Spleen (tissue), 13 donors: ENCODE measurements at regions of chr22 and their contacts with region 1.

Region 1: GRCh38 chr22:26669060-26669481 is 11.7 kb downstream of the MIAT start:
- DNase-seq: peak; percentile 56
- H3K4me3 ChIP-seq: no peak overlapping the region
- H3K27ac ChIP-seq: peak overlapping the region in 4 of 8 donors; percentile 13 to 100 (median 100)
- H3K4me1 ChIP-seq: peaks cover 17 to 96% (median 65%) of the 10 kb centered on the region in 6 donors
- H3K27me3 ChIP-seq: no peaks in the 10 kb centered on the region
- CTCF ChIP-seq: peak in 7 of 11 experiments; percentile 25 to 56 (median 39)
- POLR2A ChIP-seq: no peak

Region 2: GRCh38 chr22:26483439-26484359 is 185.4 kb before region 1 on chr22 and contains the starts of genes HPS4 and SRRD:
- intact Hi-C with region 1: loop called (anchors 10 kb)
- DNase-seq: peak; percentile 98
- H3K4me3 ChIP-seq: peak within 1 kb of the TSS; percentile 75 to 93 (median 83)
- H3K27ac ChIP-seq: peak within 1 kb of the TSS; percentile 93 to 98 (median 96)
- H3K4me1 ChIP-seq: peaks cover 55 to 76% (median 73%) of the 10 kb centered on the region in 6 donors
- H3K27me3 ChIP-seq: no peaks in the 10 kb centered on the region
- CTCF ChIP-seq: peak in 3 of 11 experiments; percentile 14 to 28 (median 28)
- POLR2A ChIP-seq: peak; percentile 70 to 83 (median 78)
- total RNA-seq, gene HPS4: 34.0 to 56.6 (median 41.8) TPM
- total RNA-seq, gene SRRD: 16.4 to 21.1 (median 19.2) TPM

Region 3: DNA sequence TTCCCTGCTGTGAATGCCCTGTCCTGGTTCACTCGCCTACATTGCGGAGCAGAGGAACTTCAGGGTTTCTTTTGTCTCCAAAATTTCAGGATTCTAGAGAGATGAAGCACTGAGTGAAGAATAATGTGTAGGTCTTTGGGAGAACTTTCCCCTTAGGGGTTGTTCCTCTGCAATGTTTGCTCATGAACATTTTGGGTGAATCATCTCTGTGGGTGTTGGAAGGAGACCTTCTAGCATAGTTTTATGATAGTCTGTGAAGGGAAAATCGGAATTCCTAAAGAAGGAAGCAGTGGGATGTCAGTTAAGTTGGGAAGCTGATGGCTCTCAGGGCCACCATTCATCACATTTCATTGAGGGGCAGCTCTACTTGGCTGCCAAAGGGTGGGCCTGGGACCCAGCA is 53.1 kb after region 1 on chr22:
- intact Hi-C with region 1: no loop called
- DNase-seq: no peak
- H3K4me3 ChIP-seq: no peak overlapping the region
- H3K27ac ChIP-seq: no peak overlapping the region
- H3K4me1 ChIP-seq: peaks cover 0 to 4% (median 0%) of the 10 kb centered on the region in 6 donors
- H3K27me3 ChIP-seq: no peaks in the 10 kb centered on the region
- CTCF ChIP-seq: no peak
- POLR2A ChIP-seq: no peak